Heart right ventricle (tissue), 16 donors: ENCODE measurements at regions of chr16 and their contacts with region 1.

Region 1: GRCh38 chr16:75943705-75944514 is 217.6 kb upstream of the CPHXL start:
- DNase-seq: no peak
- ATAC-seq: no peak
- H3K4me3 ChIP-seq: no peak overlapping the region
- H3K27ac ChIP-seq: no peak overlapping the region
- H3K4me1 ChIP-seq: no peaks in the 10 kb centered on the region
- H3K27me3 ChIP-seq: peaks cover 0 to 10% (median 0%) of the 10 kb centered on the region in 7 donors
- CTCF ChIP-seq: no peak

Region 2: GRCh38 chr16:76007649-76008048 is 63.7 kb after region 1 on chr16:
- intact Hi-C with region 1: loop called in 1 of 10 experiments (anchors 10 kb)
- DNase-seq: no peak
- ATAC-seq: no peak
- H3K4me3 ChIP-seq: no peak overlapping the region
- H3K27ac ChIP-seq: no peak overlapping the region
- H3K4me1 ChIP-seq: no peaks in the 10 kb centered on the region
- H3K27me3 ChIP-seq: no peaks in the 10 kb centered on the region
- CTCF ChIP-seq: no peak